Caco-2 (cell line): ENCODE measurements at regions of chr1 and their contacts with region 1.

Region 1: GRCh38 chr1:206734499-206735142 is 36.0 kb upstream of the IL19 start:
- DNase-seq: peak in 1 of 2 experiments; percentile 75
- H3K4me3 ChIP-seq: no peak overlapping the region
- H3K4me3 Mint-ChIP-seq: no peak overlapping the region
- H3K27ac Mint-ChIP-seq: no peak overlapping the region
- H3K4me1 ChIP-seq: no peaks in the 10 kb centered on the region
- H3K4me1 Mint-ChIP-seq: peaks cover 21% of the 10 kb centered on the region
- H3K27me3 ChIP-seq: no peaks in the 10 kb centered on the region
- H3K27me3 Mint-ChIP-seq: no peaks in the 10 kb centered on the region
- CTCF ChIP-seq: peak; percentile 84 to 85

Region 2: DNA sequence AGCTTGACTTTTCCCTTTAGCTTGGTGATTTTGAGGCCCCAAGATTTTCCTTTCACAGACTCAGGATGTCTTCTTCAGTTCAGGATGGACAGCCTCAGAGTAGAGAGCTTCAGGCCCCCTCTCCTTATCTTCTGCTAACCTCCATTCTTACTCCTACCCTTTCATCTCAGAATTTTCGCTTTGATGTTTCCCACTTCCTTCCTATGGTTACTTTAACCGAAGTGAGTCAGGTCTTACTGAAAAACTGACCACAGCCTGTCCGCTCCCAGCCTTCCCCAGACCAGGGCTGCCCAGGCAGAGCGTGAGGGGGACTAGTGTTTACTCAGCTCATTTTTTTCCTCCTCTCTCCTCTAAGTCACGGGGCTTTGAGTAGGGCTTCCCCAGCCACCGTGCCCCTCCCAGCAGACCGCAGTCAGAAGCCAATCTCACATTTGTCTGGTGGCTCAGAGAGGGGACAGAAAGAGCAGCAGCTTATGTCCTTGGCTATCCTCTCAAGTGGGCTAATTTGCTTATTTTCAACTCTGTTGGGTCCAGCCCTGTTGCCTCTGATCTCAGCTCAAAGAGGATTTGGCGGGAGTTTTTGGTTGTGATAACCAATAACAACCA is 31.7 kb after region 1 on chr1:
- CTCF ChIA-PET with region 1: interaction called, 4 read pairs
- POLR2A ChIA-PET with region 1: no interaction called
- intact Hi-C with region 1: loop called (anchors 2 kb)
- DNase-seq: peak; percentile 65 to 71
- H3K4me3 ChIP-seq: no peak overlapping the region
- H3K4me3 Mint-ChIP-seq: peak overlapping the region; percentile 56
- H3K27ac Mint-ChIP-seq: peak overlapping the region; percentile 70
- H3K4me1 ChIP-seq: peaks cover 30% of the 10 kb centered on the region
- H3K4me1 Mint-ChIP-seq: peaks cover 25% of the 10 kb centered on the region
- H3K27me3 ChIP-seq: no peaks in the 10 kb centered on the region
- H3K27me3 Mint-ChIP-seq: no peaks in the 10 kb centered on the region
- CTCF ChIP-seq: no peak

Region 3: DNA sequence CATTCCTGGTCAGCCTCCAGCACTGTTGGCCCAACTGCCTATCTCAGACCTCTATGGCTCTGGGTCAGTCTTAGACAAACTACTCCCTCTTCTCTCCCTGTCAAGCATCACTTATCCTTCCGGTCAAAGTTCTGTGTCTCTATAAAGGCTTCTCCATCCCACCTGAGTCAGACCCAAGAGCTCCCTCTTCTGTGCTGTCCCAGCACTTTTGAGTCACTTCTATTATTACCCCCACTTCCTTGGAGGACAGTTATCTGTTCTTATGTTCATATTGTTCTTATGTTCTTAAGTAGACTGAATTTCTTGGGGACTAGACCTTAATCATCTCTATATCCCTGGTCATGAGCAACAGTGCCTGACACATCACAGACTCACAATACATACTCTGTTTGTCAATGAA is 66.8 kb after region 1 on chr1:
- CTCF ChIA-PET with region 1: interaction called, 6 read pairs
- POLR2A ChIA-PET with region 1: no interaction called
- intact Hi-C with region 1: loop called (anchors 1 kb)
- DNase-seq: peak; percentile 46 to 50
- H3K4me3 ChIP-seq: no peak overlapping the region
- H3K4me3 Mint-ChIP-seq: no peak overlapping the region
- H3K27ac Mint-ChIP-seq: no peak overlapping the region
- H3K4me1 ChIP-seq: no peaks in the 10 kb centered on the region
- H3K4me1 Mint-ChIP-seq: peaks cover 6% of the 10 kb centered on the region
- H3K27me3 ChIP-seq: no peaks in the 10 kb centered on the region
- H3K27me3 Mint-ChIP-seq: no peaks in the 10 kb centered on the region
- CTCF ChIP-seq: peak; percentile 16 to 51

Region 4: GRCh38 chr1:206808615-206809014 is 74.0 kb after region 1 on chr1:
- CTCF ChIA-PET with region 1: interaction called, 6 read pairs
- POLR2A ChIA-PET with region 1: no interaction called
- intact Hi-C with region 1: loop called (anchors 1 kb)
- DNase-seq: peak; percentile 46 to 57
- H3K4me3 ChIP-seq: no peak overlapping the region
- H3K4me3 Mint-ChIP-seq: no peak overlapping the region
- H3K27ac Mint-ChIP-seq: no peak overlapping the region
- H3K4me1 ChIP-seq: no peaks in the 10 kb centered on the region
- H3K4me1 Mint-ChIP-seq: no peaks in the 10 kb centered on the region
- H3K27me3 ChIP-seq: no peaks in the 10 kb centered on the region
- H3K27me3 Mint-ChIP-seq: no peaks in the 10 kb centered on the region
- CTCF ChIP-seq: peak; percentile 48 to 59

Region 5: GRCh38 chr1:206878456-206878855 is 143.8 kb after region 1 on chr1:
- CTCF ChIA-PET with region 1: no interaction called
- POLR2A ChIA-PET with region 1: no interaction called
- intact Hi-C with region 1: no loop called
- DNase-seq: no peak
- H3K4me3 ChIP-seq: no peak overlapping the region
- H3K4me3 Mint-ChIP-seq: no peak overlapping the region
- H3K27ac Mint-ChIP-seq: no peak overlapping the region
- H3K4me1 ChIP-seq: no peaks in the 10 kb centered on the region
- H3K4me1 Mint-ChIP-seq: no peaks in the 10 kb centered on the region
- H3K27me3 ChIP-seq: no peaks in the 10 kb centered on the region
- H3K27me3 Mint-ChIP-seq: peaks cover 4% of the 10 kb centered on the region
- CTCF ChIP-seq: no peak